ENCODE measurements at regions of chr17 and their contacts with region 1.

Region 1: DNA sequence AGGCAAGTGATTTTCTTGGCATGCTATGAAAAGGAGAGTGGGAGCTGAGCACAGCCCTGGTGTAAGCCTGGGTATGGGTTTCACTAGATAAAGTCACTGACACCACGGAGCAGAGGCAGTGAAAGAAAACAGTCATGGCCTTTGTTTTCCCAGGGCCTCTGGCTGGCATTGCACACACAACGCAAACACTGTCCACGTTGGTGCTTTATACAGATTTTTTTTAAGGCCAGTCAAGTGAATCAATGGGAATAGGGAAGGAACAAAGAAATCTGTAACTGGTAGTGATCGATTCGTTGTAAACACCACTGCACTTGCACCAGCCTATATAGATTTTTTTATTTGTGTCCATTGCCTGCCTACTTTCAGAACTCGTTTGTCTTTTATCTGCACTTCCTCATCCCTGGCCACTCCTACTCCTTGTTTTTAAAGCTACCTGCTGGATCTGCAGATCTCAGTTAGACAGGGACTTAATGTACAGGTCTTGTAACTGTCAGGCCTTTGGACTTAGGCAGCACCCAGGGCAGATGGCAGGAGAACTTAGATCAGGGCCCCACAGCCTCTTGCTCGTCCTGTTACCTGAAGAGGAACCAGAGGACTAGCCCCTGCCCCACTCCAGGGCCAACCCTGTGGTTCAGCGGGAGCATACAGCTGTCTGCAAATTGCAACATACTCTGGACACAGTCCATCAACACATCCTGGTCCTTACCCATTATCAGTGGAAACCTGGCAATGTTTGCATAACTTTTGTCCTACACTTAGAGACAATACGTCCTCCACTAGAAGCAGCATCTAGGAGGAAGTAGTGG is 10.6 kb upstream of the TMIGD1 start:
- DNase-seq: peak; percentile 72
- ATAC-seq: peak; percentile 87

Region 2: GRCh38 chr17:30378824-30379302 is 34.4 kb after region 1 on chr17 and contains the start of gene CPD:
- intact Hi-C with region 1: loop called (anchors 2 kb)
- DNase-seq: peak; percentile 98
- ATAC-seq: peak; percentile 98
- total RNA-seq, gene CPD: 20.2 TPM

Measured in Right ventricle myocardium inferior (tissue), 1 donor.